ENCODE measurements at regions of chrX and their contacts with region 1.

Region 1: GRCh38 chrX:54407266-54407665 is 32.9 kb upstream of the TSR2 start:
- DNase-seq: no peak
- H3K4me3 ChIP-seq: no peak overlapping the region
- H3K27ac ChIP-seq: no peak overlapping the region
- H3K4me1 ChIP-seq: no peaks in the 10 kb centered on the region
- H3K27me3 ChIP-seq: no peaks in the 10 kb centered on the region
- CTCF ChIP-seq: no peak
- POLR2A ChIP-seq: no peak

Region 2: GRCh38 chrX:53939127-53939526 is 468.1 kb before region 1 on chrX:
- intact Hi-C with region 1: no loop called
- DNase-seq: no peak
- H3K4me3 ChIP-seq: no peak overlapping the region
- H3K27ac ChIP-seq: no peak overlapping the region
- H3K4me1 ChIP-seq: no peaks in the 10 kb centered on the region
- H3K27me3 ChIP-seq: no peaks in the 10 kb centered on the region
- CTCF ChIP-seq: no peak
- POLR2A ChIP-seq: no peak

Region 3: DNA sequence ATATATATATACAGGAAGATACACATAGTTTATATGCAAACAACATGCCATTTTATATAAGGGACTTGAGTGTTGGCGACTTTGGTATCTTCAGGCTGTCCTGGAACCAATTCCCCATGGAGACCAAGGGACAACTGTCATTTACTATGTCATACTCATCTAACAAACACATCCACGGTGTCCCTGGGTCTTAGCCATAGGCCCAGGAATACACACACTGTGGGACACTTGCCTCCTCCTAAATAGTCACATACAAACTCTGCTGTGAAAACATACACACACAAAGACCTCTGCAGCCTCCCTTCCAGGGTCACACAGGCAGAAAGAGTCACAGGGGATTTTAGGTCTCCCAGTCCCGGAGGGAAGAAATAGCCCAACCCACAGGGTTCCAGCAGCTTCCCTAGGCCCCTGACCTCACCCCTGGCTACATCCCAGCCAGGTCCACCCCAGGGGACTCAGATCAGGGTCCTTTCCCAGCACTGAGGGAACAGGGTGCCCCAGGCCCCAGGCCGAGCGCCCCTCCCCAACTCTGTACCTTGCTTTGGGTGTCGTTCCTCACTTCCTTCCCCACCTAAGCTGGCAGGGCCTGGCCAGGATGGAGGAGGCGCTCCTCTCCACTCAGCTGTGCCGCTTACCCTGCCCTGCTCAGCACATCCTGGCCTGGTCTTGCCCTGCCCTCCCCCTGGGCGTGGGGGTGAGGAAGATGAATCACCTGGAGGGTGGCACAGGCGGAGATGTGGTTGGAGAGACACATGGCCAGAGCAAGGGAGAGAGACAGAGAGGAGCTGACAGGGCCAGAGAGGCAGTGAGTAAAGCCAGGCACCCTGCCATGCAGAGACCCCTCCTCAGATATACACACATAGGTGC is 67.0 kb after region 1 on chrX:
- intact Hi-C with region 1: loop called (anchors 10 kb)
- DNase-seq: no peak
- H3K4me3 ChIP-seq: no peak overlapping the region
- H3K27ac ChIP-seq: no peak overlapping the region
- H3K4me1 ChIP-seq: no peaks in the 10 kb centered on the region
- H3K27me3 ChIP-seq: no peaks in the 10 kb centered on the region
- CTCF ChIP-seq: no peak
- POLR2A ChIP-seq: no peak